ENCODE measurements at regions of chr7 and their contacts with region 1.

Region 1: DNA sequence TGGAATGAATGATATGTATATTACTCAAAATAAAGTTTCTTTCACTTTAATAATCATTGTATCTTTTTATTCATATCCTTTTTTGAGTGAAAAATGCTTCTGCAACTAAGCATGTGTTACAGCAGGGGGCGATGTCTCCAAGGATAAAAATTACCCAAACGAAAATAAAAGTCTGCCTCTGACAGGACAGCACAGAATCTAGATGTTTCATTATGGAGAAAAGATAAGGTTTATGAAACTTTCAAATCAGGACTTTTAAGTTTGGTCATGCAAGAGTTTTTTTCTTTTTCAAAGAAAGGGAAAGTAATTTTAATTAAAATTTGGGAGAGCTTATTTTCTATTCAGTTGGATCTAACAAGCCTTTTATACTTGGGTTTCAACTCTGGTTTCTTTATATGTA is 48.4 kb downstream of the TES start:
- DNase-seq: peak; percentile 71
- H3K4me3 Mint-ChIP-seq: no peak overlapping the region
- H3K27ac Mint-ChIP-seq: peak overlapping the region; percentile 96
- H3K4me1 Mint-ChIP-seq: peaks cover 39% of the 10 kb centered on the region
- H3K27me3 Mint-ChIP-seq: no peaks in the 10 kb centered on the region
- CTCF ChIP-seq: peak; percentile 76

Region 2: GRCh38 chr7:116045532-116045931 is 213.2 kb before region 1 on chr7:
- CTCF ChIA-PET with region 1: no interaction called
- POLR2A ChIA-PET with region 1: no interaction called
- intact Hi-C with region 1: no loop called
- DNase-seq: no peak
- H3K4me3 Mint-ChIP-seq: no peak overlapping the region
- H3K27ac Mint-ChIP-seq: no peak overlapping the region
- H3K4me1 Mint-ChIP-seq: no peaks in the 10 kb centered on the region
- H3K27me3 Mint-ChIP-seq: peaks cover 90% of the 10 kb centered on the region
- CTCF ChIP-seq: no peak

Region 3: DNA sequence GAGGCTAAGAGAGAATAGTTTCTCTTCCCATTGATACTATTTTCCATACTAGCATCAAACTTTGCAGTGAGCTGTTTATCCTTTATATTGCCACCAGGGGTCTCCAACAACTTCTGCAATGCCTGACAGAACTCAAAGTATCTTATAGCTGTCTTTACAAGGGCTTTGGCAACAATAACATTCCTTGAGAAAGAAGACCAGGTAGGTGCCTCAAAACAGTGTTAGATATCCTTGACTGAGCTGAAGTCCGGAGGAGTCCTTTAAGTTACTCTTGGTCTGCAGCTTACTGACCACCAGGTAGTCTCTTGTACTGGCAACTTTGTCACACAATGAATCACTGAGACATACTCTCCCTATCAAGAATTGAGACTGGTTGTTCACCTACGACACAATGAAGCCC is 78.4 kb before region 1 on chr7:
- CTCF ChIA-PET with region 1: interaction called, 10 read pairs
- POLR2A ChIA-PET with region 1: interaction called, 9 read pairs
- intact Hi-C with region 1: no loop called
- DNase-seq: peak; percentile 73
- H3K4me3 Mint-ChIP-seq: no peak overlapping the region
- H3K27ac Mint-ChIP-seq: no peak overlapping the region
- H3K4me1 Mint-ChIP-seq: peaks cover 16% of the 10 kb centered on the region
- H3K27me3 Mint-ChIP-seq: no peaks in the 10 kb centered on the region
- CTCF ChIP-seq: peak; percentile 80

Region 4: GRCh38 chr7:116271963-116272839 is 13.5 kb after region 1 on chr7:
- CTCF ChIA-PET with region 1: interaction called, 7 read pairs
- POLR2A ChIA-PET with region 1: interaction called, 54 read pairs
- intact Hi-C with region 1: no loop called
- DNase-seq: peak; percentile 96
- H3K4me3 Mint-ChIP-seq: peak overlapping the region; percentile 58
- H3K27ac Mint-ChIP-seq: peak overlapping the region; percentile 82
- H3K4me1 Mint-ChIP-seq: peaks cover 47% of the 10 kb centered on the region
- H3K27me3 Mint-ChIP-seq: no peaks in the 10 kb centered on the region
- CTCF ChIP-seq: no peak

Region 5: DNA sequence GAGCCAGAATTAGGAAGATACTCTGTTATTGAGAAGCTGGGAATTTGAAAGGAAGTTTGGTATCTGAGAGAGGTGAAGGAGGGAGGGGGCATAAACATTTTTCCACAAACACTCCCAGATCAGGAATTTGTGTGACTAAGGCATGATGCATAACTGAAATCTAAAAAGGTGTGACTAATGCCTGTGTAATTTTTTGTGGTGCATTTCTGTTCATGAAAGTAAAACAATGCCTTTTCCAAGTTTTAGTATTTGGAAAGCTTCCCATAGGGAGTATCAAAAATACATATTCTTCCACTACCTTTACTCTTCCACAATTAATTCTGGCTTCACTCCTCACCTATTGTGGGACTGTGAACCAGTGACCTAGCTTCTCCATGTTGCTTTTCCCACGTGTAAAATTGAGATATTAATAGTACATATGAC is 184.4 kb after region 1 on chr7:
- CTCF ChIA-PET with region 1: interaction called, 7 read pairs
- POLR2A ChIA-PET with region 1: interaction called, 13 read pairs
- intact Hi-C with region 1: loop called (anchors 2 kb)
- DNase-seq: peak; percentile 93
- H3K4me3 Mint-ChIP-seq: peak overlapping the region; percentile 6
- H3K27ac Mint-ChIP-seq: peak overlapping the region; percentile 93
- H3K4me1 Mint-ChIP-seq: peaks cover 38% of the 10 kb centered on the region
- H3K27me3 Mint-ChIP-seq: no peaks in the 10 kb centered on the region
- CTCF ChIP-seq: no peak

Region 6: DNA sequence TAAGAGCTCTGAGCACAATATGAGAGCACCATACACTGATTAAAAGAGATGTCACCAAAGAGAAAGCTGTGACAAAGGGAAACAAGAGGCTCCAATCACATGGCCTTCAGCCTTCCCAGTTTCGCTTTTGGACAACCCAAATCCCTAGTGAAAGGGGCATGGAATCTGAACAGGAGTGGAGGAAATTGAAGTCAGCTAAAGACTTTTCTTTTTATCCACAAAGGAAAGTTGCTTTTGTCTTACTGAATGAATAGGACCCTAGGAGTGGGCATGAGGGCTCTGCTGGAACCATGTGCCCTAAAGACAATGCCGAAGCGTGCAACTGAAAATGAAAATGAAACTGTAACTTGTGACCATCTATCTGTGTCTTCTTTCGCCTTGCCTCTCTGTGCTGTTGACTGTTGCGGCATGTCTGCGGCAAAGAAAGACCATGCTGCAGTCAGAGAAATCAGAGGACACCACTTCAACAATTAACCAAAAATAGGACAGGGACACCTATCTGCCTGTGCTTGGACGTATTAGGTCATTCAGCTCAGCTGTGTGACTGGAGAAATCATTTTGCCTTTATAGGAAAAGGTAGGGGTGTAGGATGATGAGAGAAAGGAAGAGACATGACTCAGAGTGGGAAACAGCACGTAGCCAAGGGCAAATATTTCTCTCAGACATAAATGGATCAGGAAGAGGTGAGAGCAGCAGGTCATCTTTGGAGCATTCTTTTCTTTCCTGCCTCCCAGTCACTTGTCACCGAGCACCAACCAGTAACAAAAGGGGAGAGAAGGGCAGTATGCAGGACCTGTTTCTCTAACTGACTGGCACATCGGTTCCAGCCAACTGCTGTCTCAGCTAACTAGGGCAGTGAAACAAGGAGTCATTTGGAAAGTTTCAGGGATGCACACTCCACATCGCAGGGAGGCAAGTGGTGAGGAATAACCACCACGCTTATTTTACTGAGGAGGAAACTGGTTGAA is 253.1 kb after region 1 on chr7:
- CTCF ChIA-PET with region 1: interaction called, 5 read pairs
- POLR2A ChIA-PET with region 1: interaction called, 29 read pairs
- intact Hi-C with region 1: no loop called
- DNase-seq: peak; percentile 82
- H3K4me3 Mint-ChIP-seq: peak overlapping the region; percentile 76
- H3K27ac Mint-ChIP-seq: peak overlapping the region; percentile 82
- H3K4me1 Mint-ChIP-seq: peaks cover 35% of the 10 kb centered on the region
- H3K27me3 Mint-ChIP-seq: no peaks in the 10 kb centered on the region
- CTCF ChIP-seq: no peak

Region 7: DNA sequence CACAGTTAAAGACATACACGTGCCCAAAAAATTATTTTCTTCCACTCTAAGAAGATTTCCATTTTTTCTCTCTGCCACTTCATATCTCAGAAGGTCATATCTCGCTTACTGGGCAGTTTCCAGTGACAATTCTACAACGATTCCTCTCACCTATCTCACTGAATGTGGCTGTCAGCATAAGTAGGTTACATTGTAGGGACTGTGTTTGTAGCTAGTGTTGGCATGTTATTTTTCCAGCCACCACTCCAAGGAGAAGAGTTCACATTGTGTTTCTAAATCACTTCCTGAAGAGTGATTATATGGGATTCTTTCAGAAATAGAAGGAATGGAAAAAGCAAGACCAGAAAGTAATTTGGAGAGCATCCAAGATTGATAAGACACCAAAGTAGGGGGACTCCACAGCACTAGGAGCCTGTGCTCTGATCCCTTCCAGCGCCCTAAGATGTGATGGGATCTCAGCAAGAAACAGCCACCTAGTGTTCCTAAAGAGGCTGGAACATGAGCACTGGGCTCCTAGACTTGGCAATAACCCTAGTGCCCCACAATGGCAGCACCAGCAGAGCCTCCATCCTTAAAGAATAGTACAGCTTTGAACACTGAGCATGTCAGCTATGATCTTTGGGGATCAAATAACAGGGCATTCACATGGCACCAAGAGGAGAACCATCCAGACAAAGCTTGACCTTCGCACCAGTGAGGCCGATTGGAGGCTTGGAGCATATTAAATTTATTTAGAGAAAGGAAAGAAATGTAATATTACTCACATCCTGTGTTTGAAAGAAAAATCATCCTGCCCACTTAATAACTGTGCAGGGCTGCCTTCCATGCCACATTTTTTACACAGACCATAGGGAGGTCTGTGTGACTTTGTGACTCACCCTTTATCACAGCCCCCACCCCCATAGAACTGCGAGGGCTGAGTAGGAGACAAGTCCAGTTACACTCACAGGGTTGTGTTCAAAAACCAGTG is 317.9 kb after region 1 on chr7:
- CTCF ChIA-PET with region 1: interaction called, 23 read pairs
- POLR2A ChIA-PET with region 1: interaction called, 5 read pairs
- intact Hi-C with region 1: no loop called
- DNase-seq: peak; percentile 70
- H3K4me3 Mint-ChIP-seq: no peak overlapping the region
- H3K27ac Mint-ChIP-seq: peak overlapping the region; percentile 51
- H3K4me1 Mint-ChIP-seq: peaks cover 34% of the 10 kb centered on the region
- H3K27me3 Mint-ChIP-seq: no peaks in the 10 kb centered on the region
- CTCF ChIP-seq: no peak

Region 8: DNA sequence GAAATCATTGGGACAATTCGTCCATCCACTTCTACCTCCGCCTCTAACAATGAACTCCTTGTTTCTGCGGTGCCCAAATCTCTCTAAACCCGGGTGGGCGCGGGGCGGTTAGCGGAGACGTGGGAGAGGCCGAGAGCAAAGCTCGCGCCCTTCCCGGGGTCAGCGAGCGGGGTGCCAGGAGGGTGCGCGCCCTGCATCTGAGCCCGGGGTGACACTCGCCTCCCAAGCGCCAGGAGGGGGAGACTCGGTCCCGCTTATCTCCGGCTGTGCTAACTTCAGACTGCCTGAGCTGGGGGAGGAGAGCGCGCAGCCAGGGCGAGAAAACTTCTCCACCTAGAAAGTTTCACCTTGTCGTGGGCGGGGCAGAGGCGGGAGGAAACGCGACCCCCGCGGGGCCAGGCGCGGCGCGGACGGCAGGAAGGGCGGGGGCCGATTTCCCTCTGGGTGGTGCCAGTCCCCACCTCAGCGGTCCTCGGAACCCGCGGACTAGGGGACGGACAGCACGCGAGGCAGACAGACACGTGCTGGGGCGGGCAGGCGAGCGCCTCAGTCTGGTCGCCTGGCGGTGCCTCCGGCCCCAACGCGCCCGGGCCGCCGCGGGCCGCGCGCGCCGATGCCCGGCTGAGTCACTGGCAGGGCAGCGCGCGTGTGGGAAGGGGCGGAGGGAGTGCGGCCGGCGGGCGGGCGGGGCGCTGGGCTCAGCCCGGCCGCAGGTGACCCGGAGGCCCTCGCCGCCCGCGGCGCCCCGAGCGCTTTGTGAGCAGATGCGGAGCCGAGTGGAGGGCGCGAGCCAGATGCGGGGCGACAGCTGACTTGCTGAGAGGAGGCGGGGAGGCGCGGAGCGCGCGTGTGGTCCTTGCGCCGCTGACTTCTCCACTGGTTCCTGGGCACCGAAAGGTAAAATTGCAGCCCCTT is 413.2 kb after region 1 on chr7 and contains the start of gene MET:
- CTCF ChIA-PET with region 1: interaction called, 4 read pairs
- POLR2A ChIA-PET with region 1: interaction called, 5 read pairs
- intact Hi-C with region 1: loop called (anchors 5 kb)
- DNase-seq: peak; percentile 93
- H3K4me3 Mint-ChIP-seq: peak within 1 kb of the TSS; percentile 83
- H3K27ac Mint-ChIP-seq: peak within 1 kb of the TSS; percentile 98
- H3K4me1 Mint-ChIP-seq: peaks cover 19% of the 10 kb centered on the region
- H3K27me3 Mint-ChIP-seq: no peaks in the 10 kb centered on the region
- CTCF ChIP-seq: peak; percentile 64
- total RNA-seq, gene MET: 129 and 154 TPM in 2 replicates